ENCODE measurements at regions of chr15 and their contacts with region 1.

Region 1: DNA sequence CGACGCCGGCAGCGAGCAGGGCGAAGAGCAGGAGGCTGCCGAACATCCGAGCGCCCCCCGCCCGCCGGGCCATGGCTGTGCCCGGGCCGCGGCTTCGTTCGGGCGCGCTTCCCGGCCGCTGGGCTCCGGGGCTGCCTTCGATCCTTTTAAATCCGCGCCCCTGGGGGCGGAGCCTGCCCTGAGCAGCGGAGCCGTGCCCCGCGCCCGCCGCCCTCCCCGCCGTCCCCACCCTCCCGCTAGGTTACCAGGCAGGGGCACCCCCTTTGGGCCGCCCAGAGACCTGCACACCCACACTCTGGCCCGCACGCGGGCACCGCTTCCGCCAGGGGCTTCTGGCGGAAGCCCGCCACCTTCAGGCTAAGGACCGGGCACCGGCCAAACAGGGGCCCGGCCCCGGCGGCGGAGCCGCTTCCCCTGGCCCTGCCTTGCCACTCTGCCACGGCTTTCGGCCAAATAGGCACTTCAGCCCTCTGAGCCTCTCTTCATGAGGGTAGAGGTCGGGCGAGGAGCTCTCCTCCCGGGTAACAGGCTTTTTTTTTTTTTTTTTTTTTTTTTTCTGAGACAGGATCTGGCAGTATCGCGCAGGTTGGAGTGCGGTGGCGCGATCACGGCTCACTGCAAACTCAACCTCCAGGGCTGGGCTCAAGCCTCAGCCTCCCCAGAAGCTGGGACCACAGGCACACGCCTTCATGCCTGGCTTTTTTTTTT is at the start of gene NMB:
- DNase-seq: peak; percentile 90
- total RNA-seq, gene NMB: 5.7 to 8.7 TPM

Region 2: DNA sequence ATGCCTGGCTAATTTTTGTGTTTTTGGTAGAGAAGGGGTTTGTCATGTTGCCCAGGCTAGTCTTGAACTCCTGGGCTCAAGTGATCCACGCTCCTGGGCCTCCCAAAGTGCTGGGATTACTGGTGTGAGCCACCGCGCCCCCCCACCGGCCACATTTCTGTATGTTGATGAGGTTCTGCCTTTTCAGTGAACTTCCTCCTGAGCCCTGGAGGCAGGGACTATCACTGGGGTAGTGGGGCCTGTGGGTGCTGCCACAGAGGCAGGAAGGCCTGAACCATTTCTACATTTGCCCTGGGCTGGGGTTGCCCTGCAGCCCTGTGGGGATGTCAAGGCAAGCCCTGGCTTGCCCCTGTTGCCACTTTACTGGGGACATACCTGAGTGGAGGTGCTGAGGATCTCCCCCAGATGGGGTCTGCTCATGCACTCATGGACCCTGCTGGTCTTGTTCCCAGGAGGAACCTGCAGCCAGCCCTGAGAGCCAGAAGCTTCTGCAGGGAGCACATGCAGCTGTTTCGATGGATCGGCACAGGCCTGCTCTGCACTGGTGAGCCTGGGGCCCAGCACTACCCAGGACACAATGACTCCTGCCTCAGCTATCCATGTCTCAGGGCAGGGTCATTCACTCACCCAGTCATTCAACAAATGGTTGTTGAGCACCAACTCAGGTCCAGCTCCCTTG is 231.9 kb after region 1 on chr15:
- intact Hi-C with region 1: no loop called
- DNase-seq: no peak

Region 3: GRCh38 chr15:84915011-84915958 is 257.1 kb after region 1 on chr15:
- intact Hi-C with region 1: loop called (anchors 10 kb)
- DNase-seq: peak; percentile 90

Measured in posterior vena cava (tissue), 2 donors.